Left ventricle myocardium inferior (tissue), 1 donor: ENCODE measurements at regions of chr1 and their contacts with region 1.

Region 1: GRCh38 chr1:116485071-116485735 is 85.6 kb downstream of the CD58 start:
- DNase-seq: peak; percentile 89
- H3K4me3 ChIP-seq: no peak overlapping the region
- H3K27ac ChIP-seq: peak overlapping the region; percentile 72
- H3K4me1 ChIP-seq: peaks cover 49% of the 10 kb centered on the region
- H3K27me3 ChIP-seq: no peaks in the 10 kb centered on the region
- CTCF ChIP-seq: peak; percentile 94

Region 2: DNA sequence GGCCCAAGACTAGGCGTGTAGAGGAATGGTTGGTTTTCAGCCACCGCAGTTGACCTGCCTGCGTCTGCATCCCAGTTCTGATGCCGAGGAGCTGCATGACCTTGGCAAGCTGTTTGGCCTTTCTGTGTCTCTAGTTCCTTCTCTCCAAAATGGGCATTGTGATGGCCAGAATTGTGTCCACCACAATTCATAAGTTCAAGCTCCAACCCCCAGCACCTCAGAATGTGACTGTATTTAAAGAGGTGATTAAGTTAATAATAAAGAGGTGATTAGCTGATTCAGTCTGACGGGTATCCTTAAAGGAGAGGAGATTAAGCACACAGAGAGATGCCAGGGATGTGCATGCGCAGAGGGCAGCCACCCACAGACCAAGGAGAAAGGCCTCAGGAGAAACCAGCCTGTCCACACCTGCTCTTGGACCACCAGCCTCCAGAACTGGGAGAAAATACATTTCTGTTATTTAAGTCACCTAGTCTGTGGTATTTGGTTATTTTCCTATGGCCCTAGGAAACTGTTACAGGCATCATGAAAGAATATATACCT is 345.5 kb before region 1 on chr1:
- intact Hi-C with region 1: loop called (anchors 5 kb)
- DNase-seq: no peak
- H3K4me3 ChIP-seq: no peak overlapping the region
- H3K27ac ChIP-seq: no peak overlapping the region
- H3K4me1 ChIP-seq: peaks cover 4% of the 10 kb centered on the region
- H3K27me3 ChIP-seq: no peaks in the 10 kb centered on the region
- CTCF ChIP-seq: no peak

Region 3: DNA sequence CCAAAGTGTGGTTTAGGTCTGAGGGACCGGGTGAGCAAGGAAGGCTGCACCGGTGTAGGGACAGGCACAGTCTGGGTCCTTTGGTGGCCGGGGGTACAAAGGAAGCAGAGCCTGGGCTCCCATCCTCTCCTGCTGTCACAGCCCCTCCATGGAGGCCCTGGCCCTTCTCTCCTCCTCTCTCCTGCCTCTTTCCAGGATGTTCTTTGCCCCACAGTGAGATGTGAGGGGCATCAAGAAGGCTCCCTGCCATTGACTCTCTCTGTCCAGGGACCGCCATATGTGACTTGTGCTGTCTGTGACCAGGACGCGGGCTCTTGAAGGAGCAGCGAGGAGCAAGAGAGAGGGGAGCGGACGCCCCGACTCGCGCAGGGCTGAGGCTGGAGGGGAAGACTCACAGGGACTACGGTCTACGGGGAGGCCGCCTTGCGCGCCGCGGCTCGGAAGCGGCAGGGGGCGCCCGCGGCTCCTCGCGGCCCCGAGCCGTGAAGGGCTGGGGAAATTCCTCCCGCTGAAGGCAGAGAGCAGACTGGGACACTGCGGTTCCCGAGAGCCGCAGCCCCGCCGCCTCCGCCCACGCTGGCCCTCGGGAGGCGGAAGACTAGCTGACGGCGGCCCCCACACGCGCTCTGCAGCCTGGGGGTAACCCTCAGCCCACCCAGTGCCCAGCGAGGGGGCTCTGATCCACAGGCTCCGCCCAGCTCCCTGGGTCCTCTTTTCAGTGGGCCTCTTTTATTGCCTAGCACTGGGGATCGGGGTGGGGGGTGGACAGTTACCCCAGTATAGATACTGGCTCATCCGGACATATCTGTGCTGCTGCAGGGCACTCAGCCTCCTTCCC is 333.2 kb before region 1 on chr1:
- intact Hi-C with region 1: loop called (anchors 5 kb)
- DNase-seq: peak; percentile 77
- H3K4me3 ChIP-seq: peak overlapping the region; percentile 65
- H3K27ac ChIP-seq: peak overlapping the region; percentile 83
- H3K4me1 ChIP-seq: peaks cover 25% of the 10 kb centered on the region
- H3K27me3 ChIP-seq: no peaks in the 10 kb centered on the region
- CTCF ChIP-seq: peak; percentile 97

Region 4: GRCh38 chr1:116345843-116346242 is 139.4 kb before region 1 on chr1:
- intact Hi-C with region 1: no loop called
- DNase-seq: no peak
- H3K4me3 ChIP-seq: no peak overlapping the region
- H3K27ac ChIP-seq: no peak overlapping the region
- H3K4me1 ChIP-seq: peaks cover 22% of the 10 kb centered on the region
- H3K27me3 ChIP-seq: no peaks in the 10 kb centered on the region
- CTCF ChIP-seq: no peak

Region 5: GRCh38 chr1:116529199-116529616 is 44.0 kb after region 1 on chr1:
- intact Hi-C with region 1: no loop called
- DNase-seq: no peak
- H3K4me3 ChIP-seq: no peak overlapping the region
- H3K27ac ChIP-seq: no peak overlapping the region
- H3K4me1 ChIP-seq: no peaks in the 10 kb centered on the region
- H3K27me3 ChIP-seq: no peaks in the 10 kb centered on the region
- CTCF ChIP-seq: no peak

Region 6: GRCh38 chr1:116570358-116571200 is 85.4 kb after region 1 on chr1 and contains the start of gene CD58:
- intact Hi-C with region 1: no loop called
- DNase-seq: peak; percentile 93
- H3K4me3 ChIP-seq: peak within 1 kb of the TSS; percentile 88
- H3K27ac ChIP-seq: peak within 1 kb of the TSS; percentile 100
- H3K4me1 ChIP-seq: peaks cover 88% of the 10 kb centered on the region
- H3K27me3 ChIP-seq: no peaks in the 10 kb centered on the region
- CTCF ChIP-seq: peak; percentile 74
- total RNA-seq, gene CD58: 32.2 TPM

Region 7: DNA sequence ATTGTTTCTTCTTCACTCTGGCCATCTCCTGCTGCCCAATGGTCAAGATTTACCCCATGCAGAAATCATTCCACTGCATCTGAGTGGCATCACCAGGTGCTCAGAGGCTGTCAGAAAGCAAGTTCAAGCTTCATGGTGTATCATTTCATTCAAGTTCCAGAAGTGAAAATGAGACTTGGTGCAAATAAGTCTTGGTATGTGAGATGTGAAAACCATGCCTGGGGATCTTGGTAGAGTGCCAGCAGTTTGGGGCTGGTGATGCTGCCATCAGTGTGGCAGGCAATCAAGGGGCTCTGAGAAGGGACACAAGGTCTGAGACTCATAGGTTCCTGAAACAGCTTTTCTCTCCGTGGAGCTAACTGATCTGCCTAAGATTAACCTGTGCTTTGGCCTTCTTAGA is 321.0 kb after region 1 on chr1:
- intact Hi-C with region 1: no loop called
- DNase-seq: no peak
- H3K4me3 ChIP-seq: no peak overlapping the region
- H3K27ac ChIP-seq: no peak overlapping the region
- H3K4me1 ChIP-seq: no peaks in the 10 kb centered on the region
- H3K27me3 ChIP-seq: peaks cover 6% of the 10 kb centered on the region
- CTCF ChIP-seq: no peak